ENCODE measurements at regions of chr1 and their contacts with region 1.

Region 1: GRCh38 chr1:160731990-160732389 is 7.1 kb upstream of the SLAMF7 start:
- DNase-seq: no peak
- CTCF ChIP-seq: no peak

Region 2: DNA sequence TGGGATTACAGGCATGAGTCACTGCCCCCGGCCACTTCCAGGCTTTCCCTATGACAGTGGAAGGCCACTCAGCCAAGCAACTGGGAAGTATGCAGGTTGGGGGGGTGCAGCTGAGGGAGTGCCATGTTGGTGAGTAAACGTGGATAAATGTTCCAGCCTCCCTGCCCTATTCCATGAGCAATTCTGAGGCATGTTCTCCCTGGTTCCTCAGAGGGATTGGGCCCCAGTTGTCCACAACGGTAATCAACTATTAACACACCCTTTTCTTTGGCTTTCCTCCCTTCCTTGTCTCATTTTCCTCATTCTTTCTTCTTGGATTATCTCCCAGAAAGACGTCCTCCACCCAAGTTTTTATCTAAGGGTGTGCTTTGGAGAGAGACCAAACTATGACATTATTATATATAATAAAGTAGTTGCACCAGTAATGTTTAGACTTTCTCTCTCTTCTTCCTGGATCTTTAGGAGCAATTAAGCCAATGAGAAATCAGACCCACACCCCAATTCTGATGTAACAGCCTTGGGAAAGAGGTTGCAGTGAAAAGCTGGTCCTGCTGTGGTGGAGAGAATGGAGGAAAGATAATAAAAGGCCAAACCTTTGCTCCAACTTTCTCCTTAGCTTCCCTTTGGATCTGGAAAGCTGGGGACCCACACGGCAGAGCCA is 771.1 kb before region 1 on chr1:
- in situ Hi-C with region 1: no loop called
- DNase-seq: no peak
- CTCF ChIP-seq: no peak

Region 3: GRCh38 chr1:160366731-160367515 is 365.1 kb before region 1 on chr1 and contains the start of gene NHLH1:
- in situ Hi-C with region 1: no loop called
- DNase-seq: no peak
- CTCF ChIP-seq: no peak

Region 4: GRCh38 chr1:160777486-160778089 is 45.6 kb after region 1 on chr1:
- in situ Hi-C with region 1: loop called (anchors 5 kb)
- DNase-seq: peak; percentile 52
- CTCF ChIP-seq: peak; percentile 55